Heart left ventricle (tissue), 16 donors: ENCODE measurements at regions of chr18 and their contacts with region 1.

Region 1: GRCh38 chr18:75507636-75508035 is 80.1 kb upstream of the SMIM21 start:
- DNase-seq: no peak
- ATAC-seq: no peak
- H3K4me3 ChIP-seq: no peak overlapping the region
- H3K27ac ChIP-seq: no peak overlapping the region
- H3K4me1 ChIP-seq: no peaks in the 10 kb centered on the region
- H3K27me3 ChIP-seq: no peaks in the 10 kb centered on the region
- CTCF ChIP-seq: no peak
- POLR2A ChIP-seq: no peak

Region 2: GRCh38 chr18:75408554-75409506 is 98.8 kb before region 1 on chr18:
- intact Hi-C with region 1: no loop called
- DNase-seq: no peak
- ATAC-seq: peak in 1 of 4 donors; percentile 46
- H3K4me3 ChIP-seq: no peak overlapping the region
- H3K27ac ChIP-seq: no peak overlapping the region
- H3K4me1 ChIP-seq: no peaks in the 10 kb centered on the region
- H3K27me3 ChIP-seq: no peaks in the 10 kb centered on the region
- CTCF ChIP-seq: no peak
- POLR2A ChIP-seq: no peak

Region 3: DNA sequence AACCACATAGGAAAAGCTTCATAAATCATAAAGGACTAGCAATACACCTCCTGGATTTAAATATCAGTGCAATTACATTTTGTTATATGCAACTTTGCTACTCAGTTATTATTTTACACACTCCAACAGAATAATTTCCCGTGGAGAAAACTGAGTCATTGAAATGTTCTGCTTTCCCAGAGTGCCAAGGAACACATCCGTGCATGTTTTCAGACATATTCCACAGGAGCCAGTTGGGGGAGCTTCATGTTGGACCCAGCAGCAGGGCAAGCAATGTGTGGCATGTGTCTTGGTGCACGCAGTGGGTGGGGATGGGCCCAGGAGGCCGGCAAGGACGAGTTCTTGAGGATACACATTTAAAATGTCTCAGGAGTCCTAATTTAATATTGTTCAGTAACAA is 65.7 kb before region 1 on chr18:
- intact Hi-C with region 1: loop called in 1 of 10 experiments (anchors 10 kb)
- DNase-seq: no peak
- ATAC-seq: no peak
- H3K4me3 ChIP-seq: no peak overlapping the region
- H3K27ac ChIP-seq: no peak overlapping the region
- H3K4me1 ChIP-seq: no peaks in the 10 kb centered on the region
- H3K27me3 ChIP-seq: peaks cover 0 to 16% (median 4%) of the 10 kb centered on the region in 9 donors
- CTCF ChIP-seq: no peak
- POLR2A ChIP-seq: no peak

Region 4: GRCh38 chr18:76064998-76065397 is 557.4 kb after region 1 on chr18:
- intact Hi-C with region 1: no loop called
- DNase-seq: no peak
- ATAC-seq: peak in 1 of 4 donors; percentile 45
- H3K4me3 ChIP-seq: no peak overlapping the region
- H3K27ac ChIP-seq: no peak overlapping the region
- H3K4me1 ChIP-seq: no peaks in the 10 kb centered on the region
- H3K27me3 ChIP-seq: peaks cover 0 to 5% (median 0%) of the 10 kb centered on the region in 9 donors
- CTCF ChIP-seq: no peak
- POLR2A ChIP-seq: no peak